T-cell (primary cell): ENCODE measurements at regions of chr1 and their contacts with region 1.

Region 1: DNA sequence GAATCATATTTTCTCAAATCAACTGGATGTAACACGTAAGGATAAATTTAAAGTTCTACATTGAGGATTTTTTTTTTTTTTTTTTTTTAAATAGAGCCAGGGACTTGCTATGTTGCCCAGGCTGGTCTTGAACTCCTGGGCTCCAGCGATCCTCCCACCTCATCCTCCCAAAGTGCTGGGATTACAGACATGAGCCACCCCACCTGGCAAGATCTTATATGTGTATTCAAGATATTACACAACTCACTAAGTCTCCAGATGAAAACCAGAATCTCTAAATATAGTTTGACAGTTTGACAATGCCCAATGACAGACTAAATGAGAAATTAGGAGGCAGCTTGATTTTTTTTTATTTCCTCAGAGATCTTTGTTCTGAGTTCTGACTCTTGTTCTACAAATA is 6.8 kb downstream of the YY1AP1 start:
- DNase-seq: no peak
- ATAC-seq: no peak
- H3K4me3 ChIP-seq: no peak overlapping the region
- H3K4me3 Mint-ChIP-seq: no peak overlapping the region
- H3K27ac ChIP-seq: no peak overlapping the region
- H3K27ac Mint-ChIP-seq: peak overlapping the region in 1 of 2 donors; percentile 58
- H3K4me1 ChIP-seq: peaks cover 9 to 24% of the 10 kb centered on the region in 2 experiments
- H3K4me1 Mint-ChIP-seq: peaks cover 46 to 52% (median 50%) of the 10 kb centered on the region in 3 donors
- H3K27me3 ChIP-seq: no peaks in the 10 kb centered on the region
- H3K27me3 Mint-ChIP-seq: no peaks in the 10 kb centered on the region

Region 2: DNA sequence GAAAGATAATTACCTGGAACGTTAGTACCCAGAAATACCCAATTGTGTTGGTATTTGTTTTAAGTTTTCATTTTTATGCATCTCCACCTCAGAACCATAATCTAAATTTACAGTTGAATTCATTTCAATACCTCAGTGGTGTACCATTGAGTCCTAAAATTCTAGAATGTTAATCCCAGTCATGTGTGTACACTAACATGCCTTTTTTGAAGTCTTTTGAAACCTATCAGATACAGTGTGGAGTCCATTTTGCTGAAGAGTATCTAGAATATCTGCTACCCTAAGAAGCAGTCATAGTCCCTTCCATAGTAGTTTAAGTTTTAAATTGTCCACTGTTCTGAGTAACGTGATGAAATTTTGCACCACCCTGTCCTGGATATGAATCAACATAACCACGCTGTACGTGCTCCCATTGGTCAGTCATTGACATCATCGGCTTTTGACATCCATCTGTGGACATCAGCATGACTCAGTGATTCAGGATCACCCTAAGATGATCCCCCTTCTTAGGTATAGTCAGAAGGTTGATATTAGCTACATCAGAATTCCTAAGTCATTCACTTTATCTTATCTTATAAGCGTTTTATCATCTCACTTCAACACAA is 111.7 kb before region 1 on chr1:
- CTCF ChIA-PET with region 1: no interaction called
- POLR2A ChIA-PET with region 1: interaction called in 1 of 2 experiments, 10 read pairs
- DNase-seq: peak in 1 of 35 experiments; percentile 5
- ATAC-seq: no peak
- H3K4me3 ChIP-seq: no peak overlapping the region
- H3K4me3 Mint-ChIP-seq: no peak overlapping the region
- H3K27ac ChIP-seq: no peak overlapping the region
- H3K27ac Mint-ChIP-seq: no peak overlapping the region
- H3K4me1 ChIP-seq: peaks cover 0 to 7% of the 10 kb centered on the region in 2 experiments
- H3K4me1 Mint-ChIP-seq: peaks cover 21 to 33% (median 30%) of the 10 kb centered on the region in 3 donors
- H3K27me3 ChIP-seq: no peaks in the 10 kb centered on the region
- H3K27me3 Mint-ChIP-seq: no peaks in the 10 kb centered on the region

Region 3: GRCh38 chr1:155669233-155670162 is 12.3 kb before region 1 on chr1:
- CTCF ChIA-PET with region 1: no interaction called
- POLR2A ChIA-PET with region 1: interaction called in 1 of 2 experiments, 10 read pairs
- DNase-seq: no peak
- ATAC-seq: no peak
- H3K4me3 ChIP-seq: no peak overlapping the region
- H3K4me3 Mint-ChIP-seq: no peak overlapping the region
- H3K27ac ChIP-seq: no peak overlapping the region
- H3K27ac Mint-ChIP-seq: no peak overlapping the region
- H3K4me1 ChIP-seq: no peaks in the 10 kb centered on the region
- H3K4me1 Mint-ChIP-seq: no peaks in the 10 kb centered on the region
- H3K27me3 ChIP-seq: no peaks in the 10 kb centered on the region
- H3K27me3 Mint-ChIP-seq: no peaks in the 10 kb centered on the region